Sciatic nerve (tissue), 2 donors: ENCODE measurements at regions of chr11 and their contacts with region 1.

Region 1: DNA sequence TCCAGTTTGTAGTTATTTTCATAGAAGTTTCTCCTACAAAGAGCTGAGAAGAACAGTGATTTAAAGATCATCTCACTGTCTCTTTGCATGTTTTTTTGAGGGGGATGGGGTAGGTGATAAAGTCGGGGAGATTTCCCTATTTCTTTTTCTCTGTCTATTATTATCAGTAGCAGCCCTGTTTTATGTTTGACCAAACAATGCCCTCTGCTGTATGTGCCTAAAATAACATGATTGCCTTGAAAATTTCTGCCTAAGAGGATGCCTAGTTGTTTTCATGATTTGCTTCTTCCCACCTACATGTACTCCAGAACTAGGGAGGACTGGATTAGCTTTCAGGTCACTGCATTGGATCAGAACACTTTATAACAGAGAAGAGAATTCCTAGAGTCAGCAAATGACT is 1330.2 kb downstream of the LRRC4C start:
- DNase-seq: no peak
- ATAC-seq: peak; percentile 34

Region 2: GRCh38 chr11:40293655-40294348 is 164.5 kb after region 1 on chr11:
- intact Hi-C with region 1: loop called (anchors 10 kb)
- DNase-seq: peak; percentile 74
- ATAC-seq: peak; percentile 93

Region 3: DNA sequence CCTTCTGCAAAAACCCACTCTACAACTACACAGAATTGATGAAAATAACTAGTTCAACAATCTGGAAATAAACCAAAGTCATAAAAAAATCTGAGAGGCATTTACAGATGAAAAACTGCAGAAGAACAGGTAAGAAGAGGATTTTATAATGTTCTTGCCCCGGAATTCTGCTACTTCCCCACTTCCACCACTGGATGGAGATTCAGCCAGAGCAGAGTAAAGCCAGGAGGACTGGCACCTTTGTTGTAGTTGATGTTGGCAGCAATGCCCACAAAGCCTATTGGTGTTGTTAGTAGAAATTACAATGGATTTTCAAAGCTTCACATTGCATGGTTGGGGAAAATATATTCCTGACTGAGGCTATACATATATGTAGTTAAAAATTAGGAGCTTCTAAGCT is 690.0 kb after region 1 on chr11:
- intact Hi-C with region 1: no loop called
- DNase-seq: no peak
- ATAC-seq: no peak